ENCODE measurements at regions of chr10 and their contacts with region 1.

Region 1: DNA sequence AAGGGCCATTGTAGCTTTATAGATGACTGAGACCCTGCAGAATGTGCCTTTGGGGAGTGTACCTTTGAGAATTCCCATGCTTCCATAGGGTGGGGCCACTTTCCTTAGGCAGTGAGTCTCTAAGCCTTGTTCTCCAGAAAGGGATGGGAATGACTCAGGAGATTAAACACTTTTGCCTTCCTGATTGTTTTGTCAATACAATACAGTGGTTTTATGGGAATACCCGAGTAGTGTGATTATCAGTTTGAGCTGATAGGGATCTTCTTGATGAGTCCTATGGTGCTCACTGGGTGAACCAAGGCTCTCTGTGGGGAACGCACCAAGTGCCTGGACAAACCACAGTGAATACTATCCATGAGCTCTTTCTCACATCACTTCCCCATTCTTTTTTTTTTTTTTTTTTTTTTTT is 6.3 kb downstream of the MYOF start:
- DNase-seq: no peak
- H3K4me3 ChIP-seq: no peak overlapping the region
- H3K27ac ChIP-seq: no peak overlapping the region
- H3K4me1 ChIP-seq: peaks cover 4% of the 10 kb centered on the region
- H3K27me3 ChIP-seq: no peaks in the 10 kb centered on the region
- CTCF ChIP-seq: no peak

Region 2: DNA sequence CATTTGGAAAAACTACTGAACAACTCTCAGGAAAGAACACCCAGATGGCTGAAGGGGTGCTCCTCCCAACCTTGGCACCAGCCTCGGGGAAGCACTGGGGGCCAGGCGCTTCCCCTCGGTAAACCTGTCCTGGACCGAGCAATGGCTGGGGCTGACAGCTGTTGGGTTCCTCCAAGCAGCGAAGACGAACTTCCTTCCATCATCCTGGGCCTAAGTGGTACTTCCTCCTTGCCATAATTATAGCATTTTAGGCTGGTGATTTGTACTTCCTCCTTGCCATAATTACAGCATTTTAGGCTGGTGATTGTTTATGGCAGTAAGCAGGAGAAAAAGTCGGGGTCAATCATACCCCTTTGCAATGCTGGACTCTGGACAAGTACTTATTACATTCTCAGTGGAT is 63.1 kb before region 1 on chr10:
- CTCF ChIA-PET with region 1: interaction called, 14 read pairs
- POLR2A ChIA-PET with region 1: no interaction called
- intact Hi-C with region 1: no loop called
- DNase-seq: no peak
- H3K4me3 ChIP-seq: no peak overlapping the region
- H3K27ac ChIP-seq: peak overlapping the region; percentile 79
- H3K4me1 ChIP-seq: peaks cover 18% of the 10 kb centered on the region
- H3K27me3 ChIP-seq: no peaks in the 10 kb centered on the region
- CTCF ChIP-seq: no peak

Region 3: GRCh38 chr10:93437088-93437945 is 38.5 kb before region 1 on chr10:
- CTCF ChIA-PET with region 1: no interaction called
- POLR2A ChIA-PET with region 1: no interaction called
- intact Hi-C with region 1: loop called (anchors 2 kb)
- DNase-seq: peak; percentile 94
- H3K4me3 ChIP-seq: no peak overlapping the region
- H3K27ac ChIP-seq: peak overlapping the region; percentile 95
- H3K4me1 ChIP-seq: peaks cover 56% of the 10 kb centered on the region
- H3K27me3 ChIP-seq: no peaks in the 10 kb centered on the region
- CTCF ChIP-seq: no peak

Region 4: GRCh38 chr10:95308389-95309302 is 1832.8 kb after region 1 on chr10:
- CTCF ChIA-PET with region 1: no interaction called
- POLR2A ChIA-PET with region 1: no interaction called
- intact Hi-C with region 1: no loop called
- DNase-seq: peak; percentile 63
- H3K4me3 ChIP-seq: no peak overlapping the region
- H3K27ac ChIP-seq: no peak overlapping the region
- H3K4me1 ChIP-seq: no peaks in the 10 kb centered on the region
- H3K27me3 ChIP-seq: no peaks in the 10 kb centered on the region
- CTCF ChIP-seq: no peak

Measured in A673 (cell line).